Caco-2 (cell line): ENCODE measurements at regions of chr7 and their contacts with region 1.

Region 1: GRCh38 chr7:90923541-90923997 is 327.4 kb downstream of the CDK14 start:
- DNase-seq: no peak
- H3K4me3 ChIP-seq: no peak overlapping the region
- H3K4me3 Mint-ChIP-seq: no peak overlapping the region
- H3K27ac Mint-ChIP-seq: no peak overlapping the region
- H3K4me1 ChIP-seq: no peaks in the 10 kb centered on the region
- H3K4me1 Mint-ChIP-seq: no peaks in the 10 kb centered on the region
- H3K27me3 ChIP-seq: no peaks in the 10 kb centered on the region
- H3K27me3 Mint-ChIP-seq: no peaks in the 10 kb centered on the region
- CTCF ChIP-seq: no peak

Region 2: DNA sequence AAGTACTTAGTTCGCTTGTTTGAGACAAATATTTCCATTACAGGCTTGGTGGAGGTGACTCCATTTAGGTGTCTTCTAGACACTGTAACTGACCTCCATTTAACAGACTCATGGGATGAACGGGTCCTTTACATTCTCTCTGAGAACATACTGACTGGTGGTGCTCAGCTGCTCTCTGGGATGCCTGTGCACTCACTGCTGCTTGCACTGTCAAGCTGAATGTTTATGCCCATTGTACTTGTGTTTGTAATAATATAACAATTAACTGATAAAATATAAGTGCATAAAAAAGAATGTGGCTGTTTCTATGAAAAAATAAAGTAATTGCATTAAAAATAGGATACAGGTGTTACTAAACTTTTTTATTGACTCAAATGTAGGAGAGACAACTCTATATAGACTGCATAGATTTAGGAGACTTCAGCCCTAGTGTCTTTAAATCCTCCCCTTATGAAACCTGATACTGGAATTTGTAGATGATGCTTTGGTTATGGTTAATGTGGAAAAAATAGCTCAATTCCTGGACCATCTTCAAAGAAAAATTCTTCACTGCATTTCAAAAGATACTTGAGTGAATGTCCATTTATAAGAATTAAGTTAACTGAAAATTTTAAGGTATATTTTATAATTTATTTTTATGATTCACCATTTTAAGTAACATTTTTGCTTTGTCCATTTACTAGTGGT is 242.1 kb before region 1 on chr7:
- CTCF ChIA-PET with region 1: no interaction called
- POLR2A ChIA-PET with region 1: no interaction called
- intact Hi-C with region 1: loop called (anchors 10 kb)
- DNase-seq: no peak
- H3K4me3 ChIP-seq: no peak overlapping the region
- H3K4me3 Mint-ChIP-seq: no peak overlapping the region
- H3K27ac Mint-ChIP-seq: no peak overlapping the region
- H3K4me1 ChIP-seq: no peaks in the 10 kb centered on the region
- H3K4me1 Mint-ChIP-seq: peaks cover 8% of the 10 kb centered on the region
- H3K27me3 ChIP-seq: no peaks in the 10 kb centered on the region
- H3K27me3 Mint-ChIP-seq: no peaks in the 10 kb centered on the region
- CTCF ChIP-seq: no peak